Activated CD4-positive, alpha-beta T cell treated with anti-CD3 and anti-CD28 coated beads for 36 hours (primary cell): ENCODE measurements at regions of chr5 and their contacts with region 1.

Region 1: GRCh38 chr5:79990598-79991507 is at the start of gene MTX3:
- DNase-seq: peak; percentile 94
- ATAC-seq: peak; percentile 84
- H3K4me3 Mint-ChIP-seq: peak within 1 kb of the TSS; percentile 89
- H3K27ac Mint-ChIP-seq: peak within 1 kb of the TSS; percentile 98
- H3K4me1 Mint-ChIP-seq: peaks cover 49% of the 10 kb centered on the region
- H3K27me3 Mint-ChIP-seq: peaks cover 2% of the 10 kb centered on the region
- total RNA-seq, gene MTX3: 11.9 to 14.3 TPM

Region 2: DNA sequence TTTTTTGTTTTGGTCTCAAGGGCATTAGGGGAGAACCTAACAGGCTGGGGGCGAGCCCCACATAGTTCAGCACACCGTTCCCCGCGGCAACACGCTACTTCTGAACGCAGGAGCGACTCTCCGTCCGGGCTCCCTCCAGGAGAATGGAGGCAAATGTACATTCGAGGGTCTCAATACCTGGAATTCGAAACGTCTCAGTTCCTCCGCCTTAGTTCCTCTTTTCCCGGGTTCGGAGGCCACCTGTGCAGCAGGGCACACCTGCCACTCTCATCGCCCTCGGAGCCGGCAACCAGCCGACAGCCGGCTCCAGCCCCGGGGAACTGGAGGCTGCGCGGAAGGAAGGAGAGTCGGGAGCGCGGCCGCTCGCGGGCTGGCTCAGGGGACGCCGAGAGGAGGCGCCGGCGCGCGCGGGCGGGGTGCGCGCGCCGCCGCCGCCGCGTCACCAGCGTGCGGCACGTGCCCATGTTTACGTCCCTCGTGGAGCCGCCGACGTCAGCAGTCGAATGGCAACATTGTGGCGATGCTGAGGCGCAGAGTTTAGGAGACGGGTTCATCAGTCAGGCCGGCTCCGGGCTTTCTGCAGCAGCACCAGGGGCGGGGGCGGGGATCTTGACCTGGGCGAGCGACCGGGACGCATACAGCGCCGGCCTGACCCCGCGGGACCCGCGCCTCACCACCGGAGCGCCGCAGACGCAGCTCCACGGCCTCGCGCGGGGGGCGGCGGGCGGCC is 755.1 kb before region 1 on chr5 and contains the start of gene JMY:
- CTCF ChIA-PET with region 1: no interaction called
- POLR2A ChIA-PET with region 1: no interaction called
- intact Hi-C with region 1: loop called in 1 of 2 experiments (anchors 2 kb)
- DNase-seq: peak; percentile 93
- ATAC-seq: peak; percentile 78
- H3K4me3 Mint-ChIP-seq: peak within 1 kb of the TSS; percentile 97
- H3K27ac Mint-ChIP-seq: peak within 1 kb of the TSS; percentile 99
- H3K4me1 Mint-ChIP-seq: peaks cover 25% of the 10 kb centered on the region
- H3K27me3 Mint-ChIP-seq: no peaks in the 10 kb centered on the region
- total RNA-seq, gene JMY: 7.3 to 7.4 TPM

Region 3: DNA sequence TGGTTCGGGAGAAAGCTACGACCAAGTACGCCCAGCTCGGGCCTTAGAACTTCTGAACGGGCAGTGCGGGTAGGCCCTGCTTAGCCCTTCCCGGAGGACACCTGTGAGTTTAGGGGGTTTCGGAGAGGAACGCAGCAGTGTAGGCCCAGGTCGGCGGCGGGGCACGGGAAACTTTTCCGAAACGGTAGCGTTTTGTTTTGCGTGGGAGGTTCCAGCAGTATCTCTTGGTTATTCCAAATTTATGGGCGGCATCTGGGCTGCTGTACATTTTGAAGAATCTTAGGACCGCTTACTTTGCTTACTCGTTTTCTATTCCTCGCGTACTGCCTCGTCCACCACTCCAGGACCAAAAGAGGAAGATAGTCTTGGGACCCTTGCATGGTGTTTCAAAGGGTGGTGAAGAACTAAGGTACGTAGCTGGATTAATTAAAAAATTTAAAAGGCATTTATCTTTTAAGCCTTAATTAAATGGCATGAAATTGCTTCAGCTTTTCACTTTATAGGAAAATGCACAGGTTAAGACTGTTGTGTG is 378.1 kb before region 1 on chr5:
- CTCF ChIA-PET with region 1: no interaction called
- POLR2A ChIA-PET with region 1: no interaction called
- intact Hi-C with region 1: loop called in 1 of 2 experiments (anchors 2 kb)
- DNase-seq: no peak
- ATAC-seq: no peak
- H3K4me3 Mint-ChIP-seq: peak overlapping the region; percentile 96
- H3K27ac Mint-ChIP-seq: peak overlapping the region; percentile 97
- H3K4me1 Mint-ChIP-seq: peaks cover 35% of the 10 kb centered on the region
- H3K27me3 Mint-ChIP-seq: no peaks in the 10 kb centered on the region

Region 4: DNA sequence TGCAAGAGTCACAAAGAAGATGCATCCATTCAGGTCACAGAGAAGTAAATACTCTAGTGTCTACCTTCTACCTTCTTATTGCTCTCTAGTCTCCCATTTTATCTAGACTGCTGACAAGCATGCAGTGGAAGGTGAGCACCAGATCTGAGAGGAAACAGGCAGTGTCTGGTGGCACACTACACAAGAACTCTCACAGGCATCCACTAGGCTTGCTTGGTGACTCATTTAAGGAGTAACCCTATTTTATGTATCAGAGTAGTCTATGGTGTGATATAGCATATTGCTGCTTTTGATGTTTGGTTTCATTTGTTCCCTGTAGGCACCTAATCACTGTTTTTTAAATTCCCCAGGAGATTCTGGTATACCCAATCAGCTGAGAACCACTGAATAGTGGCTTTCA is 42.7 kb after region 1 on chr5:
- CTCF ChIA-PET with region 1: interaction called, 3 read pairs
- POLR2A ChIA-PET with region 1: interaction called, 5 read pairs
- intact Hi-C with region 1: loop called (anchors 1 kb)
- DNase-seq: peak; percentile 42
- ATAC-seq: peak; percentile 91
- H3K4me3 Mint-ChIP-seq: no peak overlapping the region
- H3K27ac Mint-ChIP-seq: no peak overlapping the region
- H3K4me1 Mint-ChIP-seq: peaks cover 32% of the 10 kb centered on the region
- H3K27me3 Mint-ChIP-seq: peaks cover 35% of the 10 kb centered on the region

Region 5: GRCh38 chr5:80204808-80205614 is 214.2 kb after region 1 on chr5:
- CTCF ChIA-PET with region 1: no interaction called
- POLR2A ChIA-PET with region 1: no interaction called
- intact Hi-C with region 1: loop called in 1 of 2 experiments (anchors 1 kb)
- DNase-seq: no peak
- ATAC-seq: peak; percentile 66
- H3K4me3 Mint-ChIP-seq: peak overlapping the region; percentile 7
- H3K27ac Mint-ChIP-seq: peak overlapping the region; percentile 88
- H3K4me1 Mint-ChIP-seq: peaks cover 74% of the 10 kb centered on the region
- H3K27me3 Mint-ChIP-seq: no peaks in the 10 kb centered on the region

Region 6: DNA sequence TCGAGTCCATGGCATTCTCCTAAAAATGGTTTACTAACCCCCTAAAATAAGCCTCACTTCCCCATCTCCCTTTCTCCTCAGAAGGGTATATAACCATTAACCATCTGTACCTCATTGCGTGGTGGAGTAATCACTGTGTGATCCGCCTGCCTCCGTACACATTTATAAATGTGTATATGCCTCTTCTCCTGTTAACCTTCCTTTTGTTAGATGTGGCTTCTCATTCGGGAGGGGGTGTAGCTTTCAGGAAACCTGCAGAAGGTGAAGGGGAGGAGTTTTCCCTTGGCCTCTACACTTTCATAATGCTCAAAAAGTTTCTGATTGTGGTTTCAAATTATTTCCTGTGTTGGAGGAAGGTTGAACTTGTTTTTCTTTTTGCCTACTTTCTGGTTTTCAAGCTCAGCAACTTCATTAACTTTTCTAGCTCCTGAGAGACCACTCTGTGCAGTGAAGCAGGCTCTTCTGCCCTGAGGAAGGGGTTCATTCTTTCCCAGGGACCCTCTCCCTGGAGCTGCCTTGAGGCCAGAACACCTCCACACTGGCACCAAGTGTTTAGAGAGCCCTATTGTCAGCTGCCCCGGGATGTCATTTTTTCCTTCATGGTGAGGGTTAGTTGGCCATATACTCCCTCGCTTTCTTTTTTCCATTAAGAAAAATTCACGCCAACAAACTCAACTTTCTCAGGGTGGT is 1016.2 kb after region 1 on chr5:
- CTCF ChIA-PET with region 1: no interaction called
- POLR2A ChIA-PET with region 1: no interaction called
- intact Hi-C with region 1: loop called in 1 of 2 experiments (anchors 2 kb)
- DNase-seq: peak; percentile 71
- ATAC-seq: peak; percentile 83
- H3K4me3 Mint-ChIP-seq: peak overlapping the region; percentile 77
- H3K27ac Mint-ChIP-seq: peak overlapping the region; percentile 96
- H3K4me1 Mint-ChIP-seq: peaks cover 82% of the 10 kb centered on the region
- H3K27me3 Mint-ChIP-seq: no peaks in the 10 kb centered on the region